ENCODE measurements at regions of chr4 and their contacts with region 1.

Region 1: DNA sequence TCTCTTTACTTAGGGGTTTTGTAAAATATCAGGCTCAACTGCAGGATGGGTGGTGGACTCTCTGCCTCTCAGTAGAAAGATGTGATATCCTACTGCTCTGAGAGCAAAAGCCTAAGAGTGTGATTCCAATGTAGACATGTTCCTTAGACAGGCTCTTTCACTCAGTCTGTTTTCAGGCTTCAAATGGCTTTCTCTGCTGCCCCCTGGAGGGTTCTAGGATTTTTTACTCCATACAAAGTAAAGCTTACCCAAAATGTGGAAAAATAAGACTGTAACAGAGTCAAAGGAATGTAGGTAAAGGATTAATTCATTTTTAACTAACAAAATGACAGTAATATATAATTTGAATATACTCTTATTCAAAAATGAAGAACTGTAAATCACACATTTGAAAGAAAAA is 32.1 kb downstream of the ZGRF1 start:
- DNase-seq: peak; percentile 60 to 74
- H3K4me3 ChIP-seq: no peak overlapping the region
- H3K4me1 ChIP-seq: no peaks in the 10 kb centered on the region
- H3K27me3 ChIP-seq: no peaks in the 10 kb centered on the region

Region 2: GRCh38 chr4:112099701-112100297 is 504.8 kb before region 1 on chr4:
- in situ Hi-C with region 1: loop called (anchors 25 kb)
- DNase-seq: peak in 1 of 2 experiments; percentile 64
- H3K4me3 ChIP-seq: no peak overlapping the region
- H3K4me1 ChIP-seq: no peaks in the 10 kb centered on the region
- H3K27me3 ChIP-seq: peaks cover 18% of the 10 kb centered on the region; the same call in 1 of the 2 replicates

Region 3: GRCh38 chr4:112327965-112328733 is 276.4 kb before region 1 on chr4:
- in situ Hi-C with region 1: loop called (anchors 5 kb)
- DNase-seq: peak in 1 of 2 experiments; percentile 90
- H3K4me3 ChIP-seq: no peak overlapping the region
- H3K4me1 ChIP-seq: peaks cover 5% of the 10 kb centered on the region
- H3K27me3 ChIP-seq: no peaks in the 10 kb centered on the region